ENCODE measurements at regions of chr22 and their contacts with region 1.

Region 1: DNA sequence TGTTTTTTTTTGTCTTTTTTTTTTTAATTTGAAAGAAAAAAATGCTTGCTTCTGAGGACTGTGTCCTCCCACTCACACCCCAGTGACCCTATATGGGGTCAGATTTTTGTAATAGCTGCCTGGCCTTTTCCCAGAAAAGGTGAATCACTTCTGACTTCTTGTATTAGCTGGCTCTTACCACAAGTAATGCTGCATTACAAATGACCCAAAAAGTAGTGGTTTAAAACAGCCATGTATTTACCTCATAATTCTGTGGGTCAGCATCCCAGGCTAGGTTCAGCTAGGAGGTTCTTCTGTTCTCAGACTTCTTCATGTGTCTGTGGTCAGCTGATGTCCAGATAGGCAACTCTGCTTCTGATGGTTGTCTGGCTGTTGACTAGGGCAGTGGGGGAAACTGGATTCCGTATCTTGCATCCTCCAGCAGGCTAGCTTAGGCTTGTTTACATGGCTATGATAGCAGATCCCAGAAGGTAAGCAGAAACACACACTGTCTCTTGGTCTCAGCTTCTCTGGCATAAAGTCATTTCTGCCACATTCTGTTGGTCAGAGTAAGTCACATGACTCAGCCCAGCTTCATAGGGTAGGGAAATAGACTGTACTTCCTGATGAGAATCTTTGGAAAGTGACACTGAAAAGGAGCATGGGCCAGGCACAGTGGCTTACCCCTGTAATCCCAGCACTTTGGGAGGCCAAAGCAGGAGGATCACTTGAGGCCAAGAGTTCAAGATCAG is 19.5 kb downstream of the LHFPL7 start:
- DNase-seq: no peak
- H3K4me3 ChIP-seq: no peak overlapping the region
- H3K27ac ChIP-seq: peak overlapping the region in 6 of 59 donors; percentile 7 to 63 (median 24)
- H3K27me3 ChIP-seq: no peaks in the 10 kb centered on the region
- CTCF ChIP-seq: no peak

Region 2: DNA sequence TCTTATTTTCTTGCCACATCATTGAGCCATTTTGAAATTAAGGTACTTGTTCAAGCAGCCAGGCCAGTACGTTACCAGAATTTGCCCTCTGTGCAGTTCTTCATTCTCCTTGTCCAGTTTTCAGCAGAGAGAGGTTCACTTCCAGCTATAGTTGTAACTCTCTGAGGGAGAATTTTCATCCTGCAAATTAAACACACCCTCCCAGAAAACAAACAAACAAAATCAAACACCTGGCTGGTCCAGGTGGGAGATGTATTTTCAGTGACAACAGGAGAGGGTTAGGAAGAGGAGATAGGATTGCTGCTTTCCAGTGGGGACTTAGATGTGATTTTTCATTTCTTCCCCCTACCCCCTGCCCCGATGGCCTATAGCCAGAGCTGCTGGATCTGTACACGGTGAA is 25.6 kb before region 1 on chr22:
- intact Hi-C with region 1: no loop called
- DNase-seq: no peak
- H3K4me3 ChIP-seq: no peak overlapping the region
- H3K27ac ChIP-seq: no peak overlapping the region
- H3K27me3 ChIP-seq: no peaks in the 10 kb centered on the region
- CTCF ChIP-seq: no peak

Region 3: GRCh38 chr22:24969560-24970301 is 42.7 kb after region 1 on chr22:
- intact Hi-C with region 1: loop called in 1 of 2 experiments (anchors 5 kb)
- DNase-seq: no peak
- H3K4me3 ChIP-seq: no peak overlapping the region
- H3K27ac ChIP-seq: peak overlapping the region in 37 of 59 donors; percentile 0 to 82 (median 44)
- H3K27me3 ChIP-seq: no peaks in the 10 kb centered on the region
- CTCF ChIP-seq: no peak

Region 4: DNA sequence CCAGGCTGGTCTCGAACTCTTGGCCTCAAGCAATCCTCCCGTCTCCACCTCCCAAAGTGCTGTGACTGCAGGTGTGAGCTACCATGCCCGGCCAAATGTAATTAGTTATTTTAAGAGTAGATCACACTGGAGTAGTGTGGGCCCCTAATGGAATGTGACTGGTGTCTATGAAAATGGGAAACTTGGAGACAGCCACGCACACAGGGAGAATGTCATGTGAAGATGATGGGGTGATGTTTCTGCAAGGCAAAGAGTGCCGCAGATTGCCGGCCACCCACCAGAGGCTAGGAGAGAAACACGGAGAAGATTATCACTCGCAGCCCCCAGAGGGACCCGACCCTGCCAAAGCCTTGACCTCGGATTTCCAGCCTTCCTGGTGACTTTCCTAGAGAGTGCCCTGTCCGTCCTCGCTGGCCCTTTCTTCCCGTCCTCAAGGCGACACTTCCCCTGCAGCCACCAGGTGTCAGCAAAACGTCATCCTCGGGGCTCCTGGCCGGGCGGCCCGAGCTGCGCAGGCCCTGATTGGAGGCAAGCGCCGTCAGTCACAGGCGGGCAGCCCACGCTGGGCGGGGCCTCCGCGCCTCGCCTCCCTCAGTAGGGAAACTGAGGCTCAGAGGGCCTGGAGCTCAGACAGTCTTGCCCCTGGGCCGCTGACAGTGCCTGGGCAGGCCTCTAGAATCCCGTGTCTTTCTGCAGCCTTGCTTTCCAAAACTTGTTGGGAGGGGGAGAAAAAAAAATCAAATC is 308.7 kb after region 1 on chr22:
- intact Hi-C with region 1: no loop called
- DNase-seq: peak in 9 of 10 donors; percentile 16 to 76 (median 59)
- H3K4me3 ChIP-seq: peak overlapping the region in 24 of 59 donors; percentile 3 to 45 (median 17)
- H3K27ac ChIP-seq: no peak overlapping the region
- H3K27me3 ChIP-seq: peaks cover 0 to 38% (median 3%) of the 10 kb centered on the region in 45 donors
- CTCF ChIP-seq: peak in 54 of 56 donors; percentile 18 to 72 (median 54)